OCI-LY7 (cell line): ENCODE measurements at regions of chr5 and their contacts with region 1.

Region 1: DNA sequence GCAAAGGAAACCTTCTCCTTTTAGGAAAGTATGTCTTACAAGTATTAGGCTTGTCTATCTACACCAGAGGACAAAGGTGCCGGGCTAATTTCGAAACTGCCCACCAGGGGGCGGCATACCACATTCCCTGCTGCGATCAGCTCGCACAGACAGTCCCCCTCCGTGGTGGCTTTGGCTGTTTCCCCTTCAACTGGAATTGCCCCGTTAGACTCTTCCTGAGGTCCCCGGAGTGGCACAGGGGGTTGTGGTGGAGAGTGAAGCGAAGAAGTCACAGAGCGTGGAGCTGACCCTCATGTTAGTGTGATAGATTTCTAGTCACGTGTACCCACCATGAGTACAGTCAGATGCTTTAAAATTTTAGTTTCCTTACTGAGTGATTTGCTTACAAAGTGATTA is 17.5 kb downstream of the PTTG1 start:
- DNase-seq: peak; percentile 83
- H3K4me3 ChIP-seq: peak overlapping the region; percentile 62
- H3K27ac ChIP-seq: no peak overlapping the region
- H3K4me1 ChIP-seq: peaks cover 23% of the 10 kb centered on the region
- CTCF ChIP-seq: peak; percentile 89

Region 2: DNA sequence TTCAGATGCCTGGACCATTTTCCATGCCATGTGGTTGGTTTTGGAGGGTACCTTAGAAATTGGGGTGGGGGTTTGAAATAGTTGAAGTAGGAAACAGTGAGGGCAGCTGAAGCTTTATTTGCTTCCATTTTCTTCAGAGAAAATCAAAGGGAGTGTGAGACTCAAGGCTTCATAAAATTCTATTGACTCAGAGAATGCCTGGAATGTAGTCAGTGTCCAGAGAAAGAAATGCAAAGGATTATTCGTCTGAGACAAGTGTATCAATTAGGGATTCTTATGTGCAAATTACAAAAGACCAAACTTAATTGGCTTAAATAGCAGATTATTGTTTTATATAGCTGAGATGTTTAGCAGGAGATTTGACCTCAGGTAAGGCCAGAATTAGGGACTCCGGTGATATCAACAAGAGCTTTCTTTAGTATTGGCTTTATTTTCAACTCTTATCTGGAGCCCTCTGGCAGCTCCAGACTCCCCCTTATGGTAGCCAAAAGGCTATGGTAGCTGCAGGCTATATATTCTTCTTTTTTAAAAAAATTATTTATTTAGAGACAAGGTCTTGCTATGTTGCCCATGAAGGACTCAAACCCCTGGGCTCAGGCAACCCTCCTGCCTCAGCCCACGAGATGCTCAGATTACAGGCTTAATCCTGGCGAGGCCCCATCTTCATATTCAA is 21.3 kb after region 1 on chr5:
- CTCF ChIA-PET with region 1: interaction called, 8 read pairs
- POLR2A ChIA-PET with region 1: interaction called, 7 read pairs
- intact Hi-C with region 1: loop called (anchors 1 kb)
- DNase-seq: no peak
- H3K4me3 ChIP-seq: no peak overlapping the region
- H3K27ac ChIP-seq: no peak overlapping the region
- H3K4me1 ChIP-seq: peaks cover 18% of the 10 kb centered on the region
- CTCF ChIP-seq: peak; percentile 64

Region 3: DNA sequence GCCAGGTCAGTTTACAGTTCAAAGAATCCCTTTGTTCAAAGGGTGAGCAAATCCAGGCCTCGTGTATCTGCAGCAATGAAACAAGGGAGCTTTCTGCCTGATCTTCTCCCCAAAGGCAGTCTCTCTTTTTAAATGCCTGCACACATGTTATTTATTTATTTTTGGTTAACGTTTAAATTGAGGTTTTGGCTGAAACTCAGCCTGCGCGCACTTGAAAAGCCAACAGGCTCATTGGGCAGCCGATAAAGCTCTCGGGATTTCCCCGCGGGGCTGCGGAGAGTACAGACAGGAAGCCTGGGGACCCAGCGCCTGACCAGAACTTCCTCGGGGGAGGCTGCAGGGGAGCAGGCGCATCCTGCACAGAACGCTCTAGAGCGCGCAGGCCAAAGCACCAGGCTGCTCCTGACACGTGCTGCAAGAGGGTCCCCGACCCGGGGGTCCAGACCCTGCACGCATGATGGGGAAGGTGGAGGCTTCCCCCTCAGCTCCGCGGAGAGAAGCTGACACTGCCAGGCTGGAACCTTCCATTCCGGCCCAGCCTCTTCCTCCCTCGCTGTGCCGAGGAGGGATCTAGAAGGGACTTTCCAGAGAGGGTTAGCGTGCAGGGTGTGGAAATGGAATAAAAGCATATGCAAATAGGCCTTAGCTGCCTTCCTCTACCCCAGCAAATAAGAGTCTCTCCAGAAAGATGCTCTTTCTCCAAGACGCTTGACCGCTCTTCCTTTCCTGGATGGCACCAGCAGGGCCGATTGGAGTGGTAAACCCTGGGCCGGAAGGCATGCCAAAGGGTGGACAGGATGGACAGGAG is 28.6 kb after region 1 on chr5:
- CTCF ChIA-PET with region 1: interaction called, 9 read pairs
- POLR2A ChIA-PET with region 1: interaction called, 8 read pairs
- intact Hi-C with region 1: loop called (anchors 1 kb)
- DNase-seq: peak; percentile 83
- H3K4me3 ChIP-seq: peak overlapping the region; percentile 68
- H3K27ac ChIP-seq: peak overlapping the region; percentile 72
- H3K4me1 ChIP-seq: peaks cover 81% of the 10 kb centered on the region
- CTCF ChIP-seq: no peak

Region 4: GRCh38 chr5:160508780-160509361 is 69.7 kb after region 1 on chr5:
- CTCF ChIA-PET with region 1: interaction called, 7 read pairs
- POLR2A ChIA-PET with region 1: interaction called, 3 read pairs
- intact Hi-C with region 1: loop called (anchors 1 kb)
- DNase-seq: peak; percentile 80
- H3K4me3 ChIP-seq: no peak overlapping the region
- H3K27ac ChIP-seq: no peak overlapping the region
- H3K4me1 ChIP-seq: peaks cover 15% of the 10 kb centered on the region
- CTCF ChIP-seq: peak; percentile 92

Region 5: DNA sequence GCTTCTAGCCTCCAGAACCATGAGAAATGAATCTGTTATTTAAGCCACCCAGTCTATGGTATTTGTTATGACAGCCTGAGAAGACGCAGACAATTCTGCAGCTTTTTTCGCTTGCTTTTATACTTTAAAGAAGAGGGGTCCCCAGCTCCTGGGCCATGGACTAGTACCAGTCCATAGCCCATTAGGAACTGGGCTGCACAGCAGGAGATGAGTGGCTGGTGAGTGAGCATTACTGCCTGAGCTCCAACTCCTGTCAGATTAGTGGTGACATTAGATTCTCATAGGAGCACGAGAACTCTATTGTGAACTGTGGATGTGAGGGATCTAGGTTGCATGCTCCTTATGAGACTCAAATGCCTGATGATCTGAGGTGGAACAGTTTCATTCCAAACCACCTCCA is 134.1 kb after region 1 on chr5:
- CTCF ChIA-PET with region 1: no interaction called
- POLR2A ChIA-PET with region 1: no interaction called
- intact Hi-C with region 1: loop called (anchors 10 kb)
- DNase-seq: no peak
- H3K4me3 ChIP-seq: no peak overlapping the region
- H3K27ac ChIP-seq: no peak overlapping the region
- H3K4me1 ChIP-seq: no peaks in the 10 kb centered on the region
- CTCF ChIP-seq: no peak

Region 6: DNA sequence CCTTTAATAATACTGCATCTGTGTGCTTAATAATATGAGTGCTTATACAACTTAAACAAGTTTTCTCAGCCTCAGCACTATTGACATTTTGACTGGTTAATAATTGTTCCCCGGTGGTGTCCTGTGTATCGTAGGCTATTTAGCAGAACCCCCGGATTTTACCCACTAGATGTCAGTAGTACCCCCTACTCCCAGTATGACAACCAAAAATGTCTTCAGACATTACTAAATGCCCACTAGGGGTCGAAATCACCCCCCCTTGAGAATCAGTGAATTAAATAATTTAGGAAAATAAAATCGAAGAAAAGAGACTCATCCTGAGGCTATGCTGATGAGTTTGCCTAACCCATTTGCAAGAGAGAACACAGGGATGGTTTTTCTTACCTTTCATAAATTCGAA is 246.5 kb after region 1 on chr5:
- CTCF ChIA-PET with region 1: no interaction called
- POLR2A ChIA-PET with region 1: no interaction called
- intact Hi-C with region 1: loop called (anchors 10 kb)
- DNase-seq: peak; percentile 29
- H3K4me3 ChIP-seq: no peak overlapping the region
- H3K27ac ChIP-seq: no peak overlapping the region
- H3K4me1 ChIP-seq: no peaks in the 10 kb centered on the region
- CTCF ChIP-seq: peak; percentile 76

Region 7: DNA sequence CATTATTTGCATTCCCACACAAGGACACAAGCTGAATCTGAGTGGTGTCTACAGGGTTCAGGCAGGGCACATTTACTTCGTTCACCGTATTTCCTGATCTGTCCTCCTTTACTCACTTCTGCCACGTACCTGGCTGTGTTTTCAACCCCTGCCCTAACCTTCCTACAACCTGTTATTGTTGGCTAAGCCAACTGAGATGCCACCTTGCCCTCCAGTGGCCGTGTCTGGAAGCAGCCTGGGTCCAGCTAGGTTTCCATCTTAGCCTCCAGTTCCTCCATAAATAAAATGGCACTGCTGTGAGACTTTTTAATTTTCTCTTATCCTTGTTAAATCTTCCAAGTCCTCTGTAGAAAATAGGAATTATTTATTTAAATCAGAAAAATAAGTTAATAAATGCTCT is 348.0 kb after region 1 on chr5:
- CTCF ChIA-PET with region 1: no interaction called
- POLR2A ChIA-PET with region 1: no interaction called
- intact Hi-C with region 1: loop called (anchors 5 kb)
- DNase-seq: peak; percentile 8
- H3K4me3 ChIP-seq: no peak overlapping the region
- H3K27ac ChIP-seq: no peak overlapping the region
- H3K4me1 ChIP-seq: no peaks in the 10 kb centered on the region
- CTCF ChIP-seq: peak; percentile 54